ENCODE measurements at regions of chr1 and their contacts with region 1.

Region 1: GRCh38 chr1:228734881-228735801 is at the start of gene RHOU:
- DNase-seq: peak; percentile 62 to 87
- H3K4me3 ChIP-seq: peak within 1 kb of the TSS; percentile 65
- H3K4me3 Mint-ChIP-seq: peak within 1 kb of the TSS; percentile 89
- H3K27ac Mint-ChIP-seq: peak within 1 kb of the TSS; percentile 25
- H3K4me1 ChIP-seq: peaks cover 9% of the 10 kb centered on the region
- H3K4me1 Mint-ChIP-seq: peaks cover 6% of the 10 kb centered on the region
- H3K27me3 ChIP-seq: no peaks in the 10 kb centered on the region
- H3K27me3 Mint-ChIP-seq: no peaks in the 10 kb centered on the region
- CTCF ChIP-seq: peak in 1 of 2 experiments; percentile 73
- total RNA-seq, gene RHOU: 17.4 and 18.5 TPM in 2 replicates

Region 2: DNA sequence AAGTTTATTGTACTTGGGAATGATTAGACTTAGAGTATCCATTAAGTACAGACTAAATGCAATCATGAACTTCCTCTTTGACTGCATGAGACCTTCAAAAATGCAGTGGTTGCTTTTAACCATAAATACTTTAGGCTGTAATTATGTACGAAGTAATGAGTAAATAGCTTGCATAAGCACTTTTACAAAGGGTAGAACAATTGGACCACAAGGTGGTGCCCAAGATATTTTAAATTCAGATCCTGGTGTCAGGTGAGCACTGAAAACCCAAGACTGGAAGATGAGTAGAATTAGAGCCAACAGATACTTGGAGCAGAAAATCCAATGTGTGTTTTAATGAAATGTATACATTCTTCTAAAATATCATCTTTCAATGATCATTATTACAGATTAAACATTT is 43.2 kb before region 1 on chr1:
- CTCF ChIA-PET with region 1: no interaction called
- POLR2A ChIA-PET with region 1: no interaction called
- intact Hi-C with region 1: loop called (anchors 5 kb)
- DNase-seq: peak in 1 of 2 experiments; percentile 63
- H3K4me3 ChIP-seq: no peak overlapping the region
- H3K4me3 Mint-ChIP-seq: no peak overlapping the region
- H3K27ac Mint-ChIP-seq: no peak overlapping the region
- H3K4me1 ChIP-seq: no peaks in the 10 kb centered on the region
- H3K4me1 Mint-ChIP-seq: no peaks in the 10 kb centered on the region
- H3K27me3 ChIP-seq: no peaks in the 10 kb centered on the region
- H3K27me3 Mint-ChIP-seq: no peaks in the 10 kb centered on the region
- CTCF ChIP-seq: peak; percentile 37 to 72

Region 3: GRCh38 chr1:228721402-228721801 is 13.7 kb before region 1 on chr1:
- CTCF ChIA-PET with region 1: no interaction called
- POLR2A ChIA-PET with region 1: no interaction called
- intact Hi-C with region 1: no loop called
- DNase-seq: peak; percentile 61 to 65
- H3K4me3 ChIP-seq: no peak overlapping the region
- H3K4me3 Mint-ChIP-seq: no peak overlapping the region
- H3K27ac Mint-ChIP-seq: no peak overlapping the region
- H3K4me1 ChIP-seq: no peaks in the 10 kb centered on the region
- H3K4me1 Mint-ChIP-seq: peaks cover 7% of the 10 kb centered on the region
- H3K27me3 ChIP-seq: no peaks in the 10 kb centered on the region
- H3K27me3 Mint-ChIP-seq: no peaks in the 10 kb centered on the region
- CTCF ChIP-seq: no peak

Region 4: GRCh38 chr1:228860911-228861831 is 126.0 kb after region 1 on chr1:
- CTCF ChIA-PET with region 1: interaction called, 10 read pairs
- POLR2A ChIA-PET with region 1: interaction called, 3 read pairs
- intact Hi-C with region 1: loop called (anchors 2 kb)
- DNase-seq: peak; percentile 82 to 88
- H3K4me3 ChIP-seq: no peak overlapping the region
- H3K4me3 Mint-ChIP-seq: peak overlapping the region; percentile 64
- H3K27ac Mint-ChIP-seq: peak overlapping the region; percentile 88
- H3K4me1 ChIP-seq: peaks cover 60% of the 10 kb centered on the region
- H3K4me1 Mint-ChIP-seq: peaks cover 55% of the 10 kb centered on the region
- H3K27me3 ChIP-seq: no peaks in the 10 kb centered on the region
- H3K27me3 Mint-ChIP-seq: no peaks in the 10 kb centered on the region
- CTCF ChIP-seq: no peak

Region 5: GRCh38 chr1:229094476-229095311 is 359.6 kb after region 1 on chr1:
- CTCF ChIA-PET with region 1: no interaction called
- POLR2A ChIA-PET with region 1: no interaction called
- intact Hi-C with region 1: loop called (anchors 10 kb)
- DNase-seq: no peak
- H3K4me3 ChIP-seq: no peak overlapping the region
- H3K4me3 Mint-ChIP-seq: no peak overlapping the region
- H3K27ac Mint-ChIP-seq: peak overlapping the region; percentile 75
- H3K4me1 ChIP-seq: peaks cover 45% of the 10 kb centered on the region
- H3K4me1 Mint-ChIP-seq: peaks cover 54% of the 10 kb centered on the region
- H3K27me3 ChIP-seq: no peaks in the 10 kb centered on the region
- H3K27me3 Mint-ChIP-seq: no peaks in the 10 kb centered on the region
- CTCF ChIP-seq: no peak

Region 6: DNA sequence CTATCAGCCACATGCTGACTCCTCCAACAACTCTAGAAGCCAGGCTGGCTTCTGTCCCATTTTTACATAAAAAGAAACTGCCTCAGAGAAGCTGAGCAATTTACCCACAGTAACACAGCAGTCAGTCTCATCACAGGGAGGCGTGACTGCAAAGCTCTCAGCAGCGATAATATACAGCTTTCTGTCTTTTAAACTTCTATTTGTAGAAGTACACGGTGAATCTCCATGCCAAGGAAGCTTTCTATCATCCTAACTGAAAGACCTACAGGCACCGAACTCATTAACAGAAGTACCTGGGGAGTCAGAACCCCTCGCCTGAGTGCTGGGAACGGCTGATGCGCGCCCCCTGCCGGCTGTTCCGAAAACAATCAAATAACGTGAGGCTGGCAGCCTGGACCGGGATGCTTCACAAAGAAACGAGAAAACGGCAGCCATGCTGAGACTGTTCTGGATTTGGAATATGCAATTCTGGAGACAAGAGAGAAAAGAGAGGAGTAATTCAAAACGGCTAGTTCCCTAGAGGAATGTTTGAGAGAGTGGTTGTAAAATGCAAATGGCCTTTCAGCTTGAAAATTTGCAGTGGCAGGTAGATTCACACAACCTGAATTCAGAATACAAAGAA is 492.3 kb after region 1 on chr1:
- CTCF ChIA-PET with region 1: no interaction called
- POLR2A ChIA-PET with region 1: no interaction called
- intact Hi-C with region 1: loop called (anchors 1 kb)
- DNase-seq: peak; percentile 77 to 87
- H3K4me3 ChIP-seq: no peak overlapping the region
- H3K4me3 Mint-ChIP-seq: peak overlapping the region; percentile 11
- H3K27ac Mint-ChIP-seq: no peak overlapping the region
- H3K4me1 ChIP-seq: peaks cover 65% of the 10 kb centered on the region
- H3K4me1 Mint-ChIP-seq: peaks cover 40% of the 10 kb centered on the region
- H3K27me3 ChIP-seq: no peaks in the 10 kb centered on the region
- H3K27me3 Mint-ChIP-seq: no peaks in the 10 kb centered on the region
- CTCF ChIP-seq: peak; percentile 80 to 91

Measured in Caco-2 (cell line).